Activated T-helper 2 cell treated with anti-CD3 and anti-CD28 coated beads, Interferon-gamma antibody, Interleukin-2, Interleukin-4, amounts not matched to agents 10 μg/mL and 5 μg/mL and 100 μg/mL, durations not matched to agents 14 hours and 24 hours and 36 hours (primary cell): ENCODE measurements at regions of chr18 and their contacts with region 1.

Region 1: DNA sequence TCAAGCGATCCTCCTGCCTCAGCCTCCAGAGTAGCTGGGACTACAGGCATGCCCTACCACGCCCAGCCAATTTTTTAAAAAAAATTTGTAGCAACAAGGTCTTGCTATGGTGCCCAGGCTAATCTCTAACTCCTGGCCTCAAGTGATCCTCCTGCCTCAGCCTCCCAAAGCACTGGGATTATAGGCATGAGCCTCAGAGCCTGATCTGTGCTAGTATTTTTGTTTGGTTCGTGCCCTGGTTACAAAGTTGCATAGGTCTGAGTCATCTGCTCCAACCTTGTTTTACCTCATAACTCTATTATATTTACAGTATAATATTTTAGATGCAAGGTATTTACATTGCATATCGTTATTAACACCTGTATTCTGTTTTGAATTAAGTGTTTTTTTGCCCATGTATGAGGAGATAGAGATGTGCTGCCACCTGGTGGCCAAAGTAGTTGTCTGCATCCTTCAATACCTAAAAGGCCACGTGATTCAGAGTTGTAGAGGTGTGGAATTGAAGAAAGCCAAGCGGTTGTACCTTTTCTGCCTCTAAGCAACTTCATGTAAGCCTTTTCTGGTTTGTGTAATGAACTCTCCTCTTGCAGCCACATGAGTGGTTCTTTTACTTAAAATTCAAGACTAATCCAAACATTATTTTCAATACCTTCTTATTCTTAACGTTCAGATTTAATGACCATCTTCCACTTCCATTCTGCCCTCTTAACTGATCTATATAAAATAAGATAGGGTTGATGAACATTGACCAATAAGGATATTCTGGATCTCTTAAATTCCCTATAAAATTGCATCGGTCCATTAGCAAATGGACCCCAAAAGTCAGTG is 19.9 kb upstream of the CABYR start:
- DNase-seq: peak; percentile 62
- H3K4me3 Mint-ChIP-seq: no peak overlapping the region
- H3K27ac Mint-ChIP-seq: no peak overlapping the region
- H3K4me1 Mint-ChIP-seq: peaks cover 14% of the 10 kb centered on the region
- H3K27me3 Mint-ChIP-seq: no peaks in the 10 kb centered on the region

Region 2: GRCh38 chr18:23619388-23619881 is 499.5 kb before region 1 on chr18:
- intact Hi-C with region 1: loop called (anchors 1 kb)
- DNase-seq: no peak
- H3K4me3 Mint-ChIP-seq: no peak overlapping the region
- H3K27ac Mint-ChIP-seq: no peak overlapping the region
- H3K4me1 Mint-ChIP-seq: no peaks in the 10 kb centered on the region
- H3K27me3 Mint-ChIP-seq: peaks cover 42% of the 10 kb centered on the region

Region 3: DNA sequence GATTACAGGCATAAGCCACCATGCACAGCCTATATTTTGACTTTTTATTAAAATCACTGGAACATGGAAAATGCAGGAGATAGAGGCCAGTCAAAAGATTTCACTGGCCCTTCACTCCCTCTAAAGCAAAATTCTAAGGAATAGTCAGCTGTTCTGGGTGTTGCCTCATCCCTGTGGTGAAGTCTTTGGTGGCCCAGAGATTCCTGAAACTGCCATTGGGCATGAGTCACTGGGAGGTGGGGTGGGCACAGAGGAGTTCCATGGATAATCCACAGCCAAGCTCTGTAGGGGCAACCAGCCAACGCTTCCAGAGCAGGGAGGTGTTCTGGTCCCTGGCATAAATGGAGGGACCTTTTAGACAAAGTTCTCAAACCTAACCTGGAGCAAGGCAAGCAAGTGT is 194.2 kb before region 1 on chr18:
- intact Hi-C with region 1: loop called (anchors 5 kb)
- DNase-seq: no peak
- H3K4me3 Mint-ChIP-seq: no peak overlapping the region
- H3K27ac Mint-ChIP-seq: no peak overlapping the region
- H3K4me1 Mint-ChIP-seq: peaks cover 23% of the 10 kb centered on the region
- H3K27me3 Mint-ChIP-seq: peaks cover 12% of the 10 kb centered on the region

Region 4: DNA sequence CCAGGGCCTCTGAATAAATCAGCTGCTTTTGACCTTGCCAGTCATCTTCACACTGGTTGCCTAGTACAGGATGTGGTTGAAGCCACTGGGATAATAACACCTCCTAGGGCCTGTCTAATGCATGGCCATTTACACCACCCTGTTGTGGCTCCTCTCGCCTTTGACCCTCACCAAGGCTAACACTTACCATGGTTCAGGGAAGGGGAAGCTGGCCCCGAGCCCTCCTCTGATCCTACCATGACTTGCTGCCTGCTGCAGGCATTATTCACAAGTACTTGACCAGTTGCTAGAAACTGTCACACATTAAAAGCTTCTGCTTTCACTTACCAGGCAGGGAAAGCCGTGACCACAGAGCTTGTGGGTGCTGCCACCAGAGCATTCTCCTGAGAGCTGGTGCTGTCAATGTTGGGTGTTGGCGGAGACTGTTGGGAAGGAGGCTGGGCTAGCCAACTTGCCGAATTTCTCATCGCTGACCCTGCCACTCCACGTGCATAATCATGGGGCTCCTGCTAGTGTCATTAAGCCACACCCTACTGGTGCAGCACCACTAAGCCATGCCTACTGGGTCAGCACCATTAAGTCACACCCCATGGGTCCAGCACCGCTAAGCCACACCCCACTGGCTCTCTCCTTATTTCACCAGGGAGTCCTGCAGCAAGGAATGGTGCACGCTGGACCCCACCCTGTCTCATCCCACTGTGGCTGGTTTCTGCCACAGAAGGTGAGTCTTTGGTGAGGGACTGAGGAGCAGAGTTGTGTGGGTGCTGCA is 151.5 kb before region 1 on chr18:
- intact Hi-C with region 1: loop called (anchors 10 kb)
- DNase-seq: no peak
- H3K4me3 Mint-ChIP-seq: no peak overlapping the region
- H3K27ac Mint-ChIP-seq: no peak overlapping the region
- H3K4me1 Mint-ChIP-seq: peaks cover 45% of the 10 kb centered on the region
- H3K27me3 Mint-ChIP-seq: peaks cover 23% of the 10 kb centered on the region

Region 5: GRCh38 chr18:24051031-24051947 is 67.7 kb before region 1 on chr18:
- intact Hi-C with region 1: loop called (anchors 2 kb)
- DNase-seq: no peak
- H3K4me3 Mint-ChIP-seq: peak overlapping the region; percentile 33
- H3K27ac Mint-ChIP-seq: peak overlapping the region; percentile 80
- H3K4me1 Mint-ChIP-seq: peaks cover 62% of the 10 kb centered on the region
- H3K27me3 Mint-ChIP-seq: no peaks in the 10 kb centered on the region

Region 6: DNA sequence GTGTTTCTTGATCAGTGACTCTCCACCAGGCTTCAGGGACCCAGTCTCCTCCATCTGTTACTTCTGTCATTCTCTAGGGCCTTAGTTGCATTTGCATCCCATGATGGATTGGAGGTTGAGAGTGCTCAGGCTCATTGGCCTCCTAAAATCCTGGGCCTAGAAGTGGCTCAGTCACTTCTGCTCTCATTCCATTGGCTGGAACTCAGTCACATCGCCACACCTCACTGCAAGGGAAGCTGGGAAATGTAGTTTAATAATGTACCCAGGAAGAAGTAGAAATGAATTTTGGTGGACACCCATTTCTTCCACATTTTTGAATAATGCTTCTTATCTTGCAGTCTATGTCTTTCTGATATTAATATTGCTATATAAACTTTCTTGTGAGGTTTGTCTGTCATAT is 565.0 kb after region 1 on chr18:
- intact Hi-C with region 1: no loop called
- DNase-seq: no peak
- H3K4me3 Mint-ChIP-seq: no peak overlapping the region
- H3K27ac Mint-ChIP-seq: no peak overlapping the region
- H3K4me1 Mint-ChIP-seq: peaks cover 9% of the 10 kb centered on the region
- H3K27me3 Mint-ChIP-seq: no peaks in the 10 kb centered on the region

Region 7: DNA sequence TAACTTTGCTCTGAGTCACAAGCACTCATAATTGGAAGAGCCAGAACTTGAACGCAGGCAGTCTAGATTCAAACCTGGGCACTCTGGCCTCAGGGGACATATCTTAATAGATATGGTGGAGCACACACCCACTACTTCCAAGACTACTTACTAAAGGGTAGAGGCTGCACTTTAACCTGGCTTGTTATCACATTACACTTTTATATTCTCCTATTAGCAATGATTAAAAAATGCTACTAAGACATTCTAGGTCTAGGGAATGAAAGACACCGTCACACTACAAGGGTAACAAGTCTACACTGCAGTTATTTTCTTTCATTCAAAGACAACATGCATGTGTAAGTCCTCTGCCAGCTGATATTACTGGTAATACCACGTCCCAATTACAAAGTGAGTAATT is 974.2 kb after region 1 on chr18:
- intact Hi-C with region 1: no loop called
- DNase-seq: no peak
- H3K4me3 Mint-ChIP-seq: no peak overlapping the region
- H3K27ac Mint-ChIP-seq: no peak overlapping the region
- H3K4me1 Mint-ChIP-seq: no peaks in the 10 kb centered on the region
- H3K27me3 Mint-ChIP-seq: no peaks in the 10 kb centered on the region